ENCODE measurements at regions of chr4 and their contacts with region 1.

Region 1: DNA sequence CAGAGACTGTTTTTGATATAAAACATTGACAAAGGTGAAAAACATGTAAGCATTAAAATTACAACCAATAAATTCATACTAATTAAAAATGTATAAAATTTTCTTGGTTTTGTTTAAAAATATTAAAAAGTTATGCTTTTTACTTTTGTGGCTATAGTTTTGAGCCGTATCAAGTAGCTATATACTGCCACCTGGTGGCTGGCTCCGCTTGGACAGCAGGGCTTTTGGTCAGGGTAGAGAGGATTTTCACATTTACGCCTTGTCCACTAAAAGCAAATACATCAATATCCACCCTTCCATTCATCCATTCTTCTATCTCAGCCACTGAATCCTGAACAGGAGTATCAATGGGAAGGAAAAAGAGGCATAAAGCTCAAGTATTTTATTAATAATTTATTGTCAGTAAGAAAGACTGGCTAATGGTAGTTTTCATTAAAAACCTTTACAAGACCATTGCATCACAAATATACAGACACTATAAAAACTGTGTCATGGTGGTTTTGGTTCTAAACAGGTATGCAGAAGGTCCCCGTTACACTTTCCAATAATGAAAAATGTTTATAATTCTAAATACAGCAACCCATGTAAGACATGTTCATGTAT is 32.1 kb upstream of the MTNR1A start:
- DNase-seq: peak; percentile 43 to 47
- ATAC-seq: peak in 1 of 2 experiments; percentile 82; a peak in 4 of 6 replicates
- H3K4me3 ChIP-seq: no peak overlapping the region
- H3K27ac ChIP-seq: no peak overlapping the region
- H3K4me1 ChIP-seq: no peaks in the 10 kb centered on the region
- CTCF ChIP-seq: peak; percentile 82
- EP300 ChIP-seq: no peak
- POLR2A ChIP-seq: no peak
- RAD21 ChIP-seq: peak; percentile 58 to 61

Region 2: GRCh38 chr4:186554539-186554913 is 33.0 kb before region 1 on chr4:
- CTCF ChIA-PET with region 1: interaction called, 10 read pairs
- POLR2A ChIA-PET with region 1: no interaction called
- DNase-seq: peak; percentile 28 to 71
- ATAC-seq: peak; percentile 76 to 87; a peak in 5 of 6 replicates
- H3K4me3 ChIP-seq: peak overlapping the region; percentile 47
- H3K27ac ChIP-seq: peak overlapping the region; percentile 14 to 72; a peak in 5 of 6 replicates
- H3K4me1 ChIP-seq: no peaks in the 10 kb centered on the region
- CTCF ChIP-seq: peak; percentile 26; the same call in 2 of the 3 replicates
- EP300 ChIP-seq: no peak
- POLR2A ChIP-seq: no peak
- RAD21 ChIP-seq: peak in 1 of 2 experiments; percentile 32; a peak in 2 of 5 replicates

Measured in A549 (cell line).